ENCODE measurements at regions of chr2 and their contacts with region 1.

Region 1: GRCh38 chr2:54558188-54559005 is 102.3 kb downstream of the SPTBN1 start:
- DNase-seq: peak; percentile 43 to 85 (median 69)
- ATAC-seq: peak; percentile 67
- H3K4me3 ChIP-seq: peak overlapping the region; percentile 92 to 94
- H3K4me3 Mint-ChIP-seq: peak overlapping the region; percentile 98
- H3K27ac ChIP-seq: peak overlapping the region; percentile 81 to 82
- H3K27ac Mint-ChIP-seq: peak overlapping the region; percentile 93
- H3K4me1 ChIP-seq: peaks cover 35% of the 10 kb centered on the region
- H3K4me1 Mint-ChIP-seq: peaks cover 64% of the 10 kb centered on the region
- H3K27me3 ChIP-seq: no peaks in the 10 kb centered on the region
- H3K27me3 Mint-ChIP-seq: no peaks in the 10 kb centered on the region
- CTCF ChIP-seq: no peak

Region 2: GRCh38 chr2:54535599-54536195 is 22.7 kb before region 1 on chr2:
- CTCF ChIA-PET with region 1: interaction called, 8 read pairs
- POLR2A ChIA-PET with region 1: interaction called, 14 read pairs
- intact Hi-C with region 1: loop called in 1 of 2 experiments (anchors 2 kb)
- DNase-seq: no peak
- ATAC-seq: no peak
- H3K4me3 ChIP-seq: no peak overlapping the region
- H3K4me3 Mint-ChIP-seq: no peak overlapping the region
- H3K27ac ChIP-seq: no peak overlapping the region
- H3K27ac Mint-ChIP-seq: no peak overlapping the region
- H3K4me1 ChIP-seq: no peaks in the 10 kb centered on the region
- H3K4me1 Mint-ChIP-seq: no peaks in the 10 kb centered on the region
- H3K27me3 ChIP-seq: no peaks in the 10 kb centered on the region
- H3K27me3 Mint-ChIP-seq: no peaks in the 10 kb centered on the region
- CTCF ChIP-seq: no peak

Region 3: DNA sequence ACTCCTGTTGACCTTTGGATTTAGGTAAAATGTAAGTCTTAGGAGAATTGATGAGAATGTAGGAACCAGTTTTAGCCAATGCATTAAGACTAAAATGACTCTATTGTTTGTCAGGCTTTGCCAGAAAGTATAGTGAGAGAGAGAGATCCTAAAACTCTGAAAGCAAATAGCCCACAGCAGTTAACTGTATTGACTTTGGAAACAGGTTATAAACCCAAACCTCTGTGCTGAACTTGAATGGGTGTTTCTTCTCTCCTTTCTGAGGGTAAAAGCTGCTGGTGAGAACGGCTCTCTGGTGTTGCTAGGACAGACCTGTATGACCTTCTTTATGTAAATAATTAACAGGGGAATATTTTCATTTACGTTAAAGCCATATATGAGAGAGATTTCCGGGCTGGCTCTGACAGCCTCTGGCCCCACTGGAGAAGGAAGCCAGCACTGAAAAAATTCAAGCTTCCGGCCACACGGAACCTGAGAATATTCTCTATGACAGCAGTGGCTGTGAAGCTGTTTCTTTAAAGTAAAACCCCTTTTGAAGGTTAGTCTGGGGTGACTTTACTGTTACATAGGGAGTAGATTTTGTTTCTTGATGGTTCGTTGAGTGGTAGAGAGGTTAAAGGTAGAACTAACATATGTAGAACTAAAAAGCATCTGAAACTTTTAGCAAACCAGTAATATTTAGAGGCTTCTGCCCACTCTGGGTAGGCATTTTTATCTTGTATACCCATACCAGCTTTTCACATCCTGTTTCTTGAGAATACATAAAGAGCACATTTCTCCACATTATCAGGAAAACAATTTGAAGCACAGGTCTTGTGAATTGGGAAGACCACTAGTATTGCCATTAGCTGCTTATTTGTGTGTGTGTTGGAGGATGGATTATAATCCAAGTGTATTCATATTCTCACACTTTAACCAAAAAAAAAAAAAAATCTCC is 21.6 kb after region 1 on chr2:
- CTCF ChIA-PET with region 1: interaction called, 25 read pairs
- POLR2A ChIA-PET with region 1: interaction called, 91 read pairs
- intact Hi-C with region 1: no loop called
- DNase-seq: peak in 6 of 9 experiments; percentile 30 to 87 (median 58)
- ATAC-seq: peak; percentile 70
- H3K4me3 ChIP-seq: peak overlapping the region; percentile 1 to 23
- H3K4me3 Mint-ChIP-seq: peak overlapping the region; percentile 75
- H3K27ac ChIP-seq: peak overlapping the region; percentile 55 to 94
- H3K27ac Mint-ChIP-seq: peak overlapping the region; percentile 95
- H3K4me1 ChIP-seq: peaks cover 96% of the 10 kb centered on the region
- H3K4me1 Mint-ChIP-seq: peaks cover 95% of the 10 kb centered on the region
- H3K27me3 ChIP-seq: no peaks in the 10 kb centered on the region
- H3K27me3 Mint-ChIP-seq: no peaks in the 10 kb centered on the region
- CTCF ChIP-seq: no peak

Region 4: GRCh38 chr2:54597153-54597848 is 38.9 kb after region 1 on chr2:
- CTCF ChIA-PET with region 1: interaction called, 16 read pairs
- POLR2A ChIA-PET with region 1: interaction called, 36 read pairs
- intact Hi-C with region 1: loop called (anchors 2 kb)
- DNase-seq: peak in 3 of 9 experiments; percentile 29 to 61 (median 37)
- ATAC-seq: peak; percentile 27
- H3K4me3 ChIP-seq: peak overlapping the region in 1 of 2 experiments; percentile 7
- H3K4me3 Mint-ChIP-seq: peak overlapping the region; percentile 80
- H3K27ac ChIP-seq: peak overlapping the region; percentile 35 to 71
- H3K27ac Mint-ChIP-seq: peak overlapping the region; percentile 95
- H3K4me1 ChIP-seq: peaks cover 89% of the 10 kb centered on the region
- H3K4me1 Mint-ChIP-seq: peaks cover 94% of the 10 kb centered on the region
- H3K27me3 ChIP-seq: no peaks in the 10 kb centered on the region
- H3K27me3 Mint-ChIP-seq: no peaks in the 10 kb centered on the region
- CTCF ChIP-seq: no peak

Region 5: GRCh38 chr2:54618646-54619565 is 60.5 kb after region 1 on chr2:
- CTCF ChIA-PET with region 1: interaction called, 17 read pairs
- POLR2A ChIA-PET with region 1: interaction called, 5 read pairs
- intact Hi-C with region 1: no loop called
- DNase-seq: no peak
- ATAC-seq: no peak
- H3K4me3 ChIP-seq: no peak overlapping the region
- H3K4me3 Mint-ChIP-seq: no peak overlapping the region
- H3K27ac ChIP-seq: no peak overlapping the region
- H3K27ac Mint-ChIP-seq: peak overlapping the region; percentile 46
- H3K4me1 ChIP-seq: peaks cover 15% of the 10 kb centered on the region
- H3K4me1 Mint-ChIP-seq: peaks cover 36% of the 10 kb centered on the region
- H3K27me3 ChIP-seq: no peaks in the 10 kb centered on the region
- H3K27me3 Mint-ChIP-seq: no peaks in the 10 kb centered on the region
- CTCF ChIP-seq: no peak

Region 6: DNA sequence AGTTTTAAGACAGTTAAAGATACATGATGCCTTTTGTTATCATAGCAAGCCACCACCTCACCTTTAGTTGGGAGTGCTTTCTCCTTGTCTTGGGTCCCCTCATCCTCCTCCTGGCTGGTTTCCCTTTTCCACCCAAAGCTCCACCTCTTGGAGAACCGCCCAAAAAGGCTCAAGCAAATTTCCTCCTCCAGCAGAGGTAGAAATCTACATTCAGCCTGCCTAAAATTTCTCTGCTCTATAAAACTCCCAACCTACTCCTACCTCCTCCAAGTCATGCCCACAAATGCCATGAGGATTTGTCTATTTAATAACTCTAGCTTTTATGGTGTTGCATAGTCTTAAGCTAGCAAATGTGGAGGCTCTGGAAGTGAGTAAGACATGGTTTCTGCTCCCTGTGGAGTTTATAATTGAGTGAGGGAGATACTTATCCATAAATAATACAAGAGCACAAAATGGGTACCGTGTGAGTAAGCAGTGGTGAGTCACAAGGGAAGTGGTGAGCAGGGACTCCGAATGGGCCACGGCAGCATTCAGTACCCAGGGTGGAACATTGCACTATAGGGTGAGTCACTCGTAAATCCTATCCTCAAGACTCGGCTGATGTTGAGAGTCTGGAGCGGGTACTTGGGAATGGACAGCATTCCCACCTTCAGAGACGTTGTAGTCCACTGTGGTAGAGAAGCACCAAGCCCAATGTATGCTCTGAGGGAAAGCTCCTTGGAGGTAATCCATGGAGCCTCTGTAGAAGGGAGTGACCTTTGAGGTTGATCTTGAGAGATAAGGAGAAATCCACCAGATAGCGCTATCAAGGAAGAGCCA is 345.5 kb after region 1 on chr2:
- CTCF ChIA-PET with region 1: no interaction called
- POLR2A ChIA-PET with region 1: no interaction called
- intact Hi-C with region 1: no loop called
- DNase-seq: peak in 7 of 9 experiments; percentile 14 to 66 (median 49)
- ATAC-seq: peak; percentile 80
- H3K4me3 ChIP-seq: no peak overlapping the region
- H3K4me3 Mint-ChIP-seq: no peak overlapping the region
- H3K27ac ChIP-seq: no peak overlapping the region
- H3K27ac Mint-ChIP-seq: no peak overlapping the region
- H3K4me1 ChIP-seq: no peaks in the 10 kb centered on the region
- H3K4me1 Mint-ChIP-seq: peaks cover 4% of the 10 kb centered on the region
- H3K27me3 ChIP-seq: no peaks in the 10 kb centered on the region
- H3K27me3 Mint-ChIP-seq: no peaks in the 10 kb centered on the region
- CTCF ChIP-seq: no peak

Region 7: DNA sequence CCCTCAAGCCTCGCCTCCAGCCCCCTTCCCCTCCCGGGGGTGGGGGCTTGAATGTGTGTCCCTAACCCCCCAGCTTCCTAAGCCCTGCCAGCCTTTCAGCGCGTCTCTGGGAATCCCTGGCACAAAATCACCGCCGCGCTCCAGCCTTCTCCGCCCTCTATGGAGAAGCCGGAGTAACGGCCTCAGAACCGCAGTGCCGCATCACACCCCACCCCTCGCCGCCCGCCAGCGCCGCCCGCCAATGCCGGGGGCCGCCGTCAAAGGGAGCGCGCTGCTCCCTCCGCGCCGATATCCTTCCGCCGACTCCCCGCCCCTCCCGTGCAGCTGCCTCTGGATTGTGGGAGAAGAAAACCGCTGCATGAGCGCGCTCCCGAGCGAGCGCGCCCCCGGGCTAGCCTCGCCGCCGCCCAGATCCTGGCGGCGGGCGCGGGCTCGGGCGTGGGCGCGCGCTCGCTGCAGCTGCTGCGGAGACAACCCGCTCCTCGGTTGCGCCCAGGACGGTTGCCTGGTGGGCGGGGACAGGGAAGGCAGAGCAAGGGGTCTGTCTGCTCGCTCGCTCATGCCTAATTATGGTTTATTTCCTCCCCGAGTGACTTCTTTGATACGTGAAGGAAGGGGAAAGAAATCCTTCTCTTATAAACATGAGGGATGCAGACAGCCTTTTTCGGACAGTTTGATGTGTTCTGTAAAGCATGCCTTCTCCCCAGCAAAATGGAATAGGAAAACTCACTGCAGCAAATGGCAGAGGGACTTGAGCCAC is 861.5 kb after region 1 on chr2 and contains the start of gene CCDC88A:
- CTCF ChIA-PET with region 1: no interaction called
- POLR2A ChIA-PET with region 1: no interaction called
- intact Hi-C with region 1: loop called in 1 of 2 experiments (anchors 5 kb)
- DNase-seq: peak; percentile 71 to 96 (median 85)
- ATAC-seq: peak; percentile 80
- H3K4me3 ChIP-seq: peak within 1 kb of the TSS; percentile 75 to 93
- H3K4me3 Mint-ChIP-seq: peak within 1 kb of the TSS; percentile 92
- H3K27ac ChIP-seq: peak within 1 kb of the TSS; percentile 57 to 83
- H3K27ac Mint-ChIP-seq: peak within 1 kb of the TSS; percentile 87
- H3K4me1 ChIP-seq: peaks cover 14% of the 10 kb centered on the region
- H3K4me1 Mint-ChIP-seq: peaks cover 38% of the 10 kb centered on the region
- H3K27me3 ChIP-seq: no peaks in the 10 kb centered on the region
- H3K27me3 Mint-ChIP-seq: peaks cover 4% of the 10 kb centered on the region
- CTCF ChIP-seq: no peak
- total RNA-seq, gene CCDC88A: 9.5 to 12.3 TPM